Esophagus muscularis mucosa (tissue), 4 donors: ENCODE measurements at regions of chr6 and their contacts with region 1.

Region 1: GRCh38 chr6:108558372-108559096 is 2.2 kb upstream of the FOXO3 start:
- DNase-seq: peak; percentile 100
- H3K4me3 ChIP-seq: peak overlapping the region; percentile 83 to 95 (median 90)
- H3K27ac ChIP-seq: peak overlapping the region; percentile 98 to 100 (median 99)
- H3K4me1 ChIP-seq: peaks cover 30 to 48% (median 41%) of the 10 kb centered on the region in 4 donors
- H3K27me3 ChIP-seq: no peaks in the 10 kb centered on the region
- CTCF ChIP-seq: no peak
- EP300 ChIP-seq: peak; percentile 65
- POLR2A ChIP-seq: peak; percentile 83

Region 2: GRCh38 chr6:108655806-108656651 is 97.5 kb after region 1 on chr6:
- intact Hi-C with region 1: loop called (anchors 2 kb)
- DNase-seq: no peak
- H3K4me3 ChIP-seq: peak overlapping the region; percentile 30 to 49 (median 32)
- H3K27ac ChIP-seq: peak overlapping the region; percentile 81 to 89 (median 86)
- H3K4me1 ChIP-seq: peaks cover 87 to 100% (median 94%) of the 10 kb centered on the region in 4 donors
- H3K27me3 ChIP-seq: no peaks in the 10 kb centered on the region
- CTCF ChIP-seq: no peak
- EP300 ChIP-seq: peak; percentile 76
- POLR2A ChIP-seq: no peak

Region 3: GRCh38 chr6:108782179-108783041 is 223.9 kb after region 1 on chr6:
- intact Hi-C with region 1: loop called (anchors 5 kb)
- DNase-seq: peak; percentile 96
- H3K4me3 ChIP-seq: peak overlapping the region; percentile 42 to 55 (median 52)
- H3K27ac ChIP-seq: peak overlapping the region; percentile 8 to 70 (median 56)
- H3K4me1 ChIP-seq: peaks cover 6 to 21% (median 19%) of the 10 kb centered on the region in 4 donors
- H3K27me3 ChIP-seq: no peaks in the 10 kb centered on the region
- CTCF ChIP-seq: peak; percentile 69 to 78 (median 77)
- EP300 ChIP-seq: no peak
- POLR2A ChIP-seq: no peak

Region 4: DNA sequence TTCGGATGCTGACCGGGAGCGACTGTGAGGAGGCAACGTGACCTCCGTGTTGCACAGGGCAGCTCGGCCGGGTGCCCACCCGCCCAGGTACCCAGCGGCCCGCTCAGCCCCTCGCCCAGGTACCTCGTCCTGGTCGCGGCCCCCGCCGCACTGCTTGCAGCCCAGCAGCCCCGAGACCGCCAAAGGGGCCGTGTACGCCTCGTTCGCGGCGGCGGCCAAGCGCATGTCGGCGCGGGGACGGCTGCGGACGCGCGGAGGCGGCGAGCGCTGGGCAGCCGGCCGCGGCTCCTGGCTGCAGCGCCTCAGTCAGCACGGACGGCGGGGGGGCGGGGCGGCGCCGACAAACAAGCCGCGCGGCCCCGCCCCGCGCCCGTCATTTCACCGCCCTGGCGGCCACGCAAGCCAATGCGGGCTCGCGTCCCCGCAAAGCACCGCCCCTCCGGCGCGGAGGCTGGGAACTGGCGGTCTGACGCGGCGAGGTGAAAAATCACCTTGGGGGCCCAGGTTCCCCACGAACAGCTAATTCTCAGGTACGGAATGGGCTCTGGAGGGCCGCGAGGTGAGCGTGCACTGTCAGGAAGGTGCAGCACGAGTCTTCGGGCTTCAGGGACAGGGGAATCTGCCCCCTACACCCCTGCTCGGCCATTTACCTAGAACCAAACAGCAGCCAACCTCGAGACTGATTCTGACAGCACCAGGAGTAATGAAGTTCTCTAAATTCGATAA is 450.9 kb after region 1 on chr6:
- intact Hi-C with region 1: loop called (anchors 10 kb)
- DNase-seq: peak; percentile 96
- H3K4me3 ChIP-seq: peak overlapping the region; percentile 88 to 95 (median 92)
- H3K27ac ChIP-seq: peak overlapping the region; percentile 97
- H3K4me1 ChIP-seq: peaks cover 26 to 68% (median 48%) of the 10 kb centered on the region in 4 donors
- H3K27me3 ChIP-seq: no peaks in the 10 kb centered on the region
- CTCF ChIP-seq: peak in 2 of 3 experiments; percentile 21 to 43
- EP300 ChIP-seq: no peak
- POLR2A ChIP-seq: peak; percentile 40

Region 5: GRCh38 chr6:109082188-109082577 is 523.6 kb after region 1 on chr6:
- intact Hi-C with region 1: loop called (anchors 5 kb)
- DNase-seq: no peak
- H3K4me3 ChIP-seq: no peak overlapping the region
- H3K27ac ChIP-seq: peak overlapping the region in 3 of 4 donors; percentile 38 to 77 (median 75)
- H3K4me1 ChIP-seq: peaks cover 31 to 80% (median 74%) of the 10 kb centered on the region in 4 donors
- H3K27me3 ChIP-seq: no peaks in the 10 kb centered on the region
- CTCF ChIP-seq: no peak
- EP300 ChIP-seq: no peak
- POLR2A ChIP-seq: no peak